Activated naive CD4-positive, alpha-beta T cell treated with anti-CD3 and anti-CD28 coated beads for 36 hours (primary cell): ENCODE measurements at regions of chr22 and their contacts with region 1.

Region 1: GRCh38 chr22:37229805-37230672 is 14.0 kb downstream of the RAC2 start:
- DNase-seq: peak; percentile 98
- H3K4me3 Mint-ChIP-seq: peak overlapping the region; percentile 67
- H3K27ac Mint-ChIP-seq: peak overlapping the region; percentile 98
- H3K4me1 Mint-ChIP-seq: peaks cover 90% of the 10 kb centered on the region
- H3K27me3 Mint-ChIP-seq: no peaks in the 10 kb centered on the region

Region 2: GRCh38 chr22:36365020-36365411 is 865.0 kb before region 1 on chr22:
- CTCF ChIA-PET with region 1: no interaction called
- intact Hi-C with region 1: loop called (anchors 10 kb)
- DNase-seq: peak; percentile 98
- H3K4me3 Mint-ChIP-seq: peak overlapping the region; percentile 53
- H3K27ac Mint-ChIP-seq: peak overlapping the region; percentile 96
- H3K4me1 Mint-ChIP-seq: peaks cover 99% of the 10 kb centered on the region
- H3K27me3 Mint-ChIP-seq: no peaks in the 10 kb centered on the region

Region 3: DNA sequence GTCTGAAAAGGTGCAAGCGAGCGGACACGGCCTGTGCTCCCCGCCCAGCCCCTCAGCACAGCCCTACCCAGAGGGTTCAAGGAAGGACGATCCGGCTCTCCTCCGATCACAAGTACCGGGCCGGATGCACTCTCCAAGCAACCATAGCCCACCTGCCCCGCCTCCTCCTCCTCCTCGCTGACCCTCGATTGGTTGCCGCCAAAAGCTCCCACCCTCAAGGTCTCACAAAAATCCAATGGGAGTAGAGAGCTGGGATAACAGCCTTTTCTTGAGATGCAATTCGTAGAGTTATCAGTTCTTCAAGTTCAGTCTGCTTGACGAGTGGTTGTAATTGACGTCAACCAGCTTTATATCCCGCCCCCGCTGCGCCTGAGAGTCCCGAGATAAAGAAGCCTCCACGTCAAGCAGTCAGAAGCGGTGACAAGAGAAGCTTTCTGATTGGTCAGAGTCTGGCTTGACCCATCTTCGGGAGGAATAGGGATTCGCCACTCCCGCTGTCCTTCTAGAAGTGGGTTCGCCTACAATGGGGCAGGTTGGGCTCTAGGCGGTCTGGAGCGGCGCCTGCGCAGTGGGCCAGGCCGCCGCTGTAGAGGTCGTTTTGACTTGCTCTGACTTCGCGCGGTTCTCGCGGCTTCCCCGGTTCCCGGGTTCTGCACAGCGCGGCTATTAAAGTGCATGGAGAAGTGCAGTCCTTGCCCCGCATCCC is 453.9 kb before region 1 on chr22 and contains the start of gene IFT27:
- CTCF ChIA-PET with region 1: no interaction called
- intact Hi-C with region 1: loop called (anchors 10 kb)
- DNase-seq: peak; percentile 99
- H3K4me3 Mint-ChIP-seq: peak within 1 kb of the TSS; percentile 91
- H3K27ac Mint-ChIP-seq: peak within 1 kb of the TSS; percentile 90
- H3K4me1 Mint-ChIP-seq: peaks cover 27% of the 10 kb centered on the region
- H3K27me3 Mint-ChIP-seq: no peaks in the 10 kb centered on the region
- total RNA-seq, gene IFT27: 15.7 to 16.2 TPM

Region 4: DNA sequence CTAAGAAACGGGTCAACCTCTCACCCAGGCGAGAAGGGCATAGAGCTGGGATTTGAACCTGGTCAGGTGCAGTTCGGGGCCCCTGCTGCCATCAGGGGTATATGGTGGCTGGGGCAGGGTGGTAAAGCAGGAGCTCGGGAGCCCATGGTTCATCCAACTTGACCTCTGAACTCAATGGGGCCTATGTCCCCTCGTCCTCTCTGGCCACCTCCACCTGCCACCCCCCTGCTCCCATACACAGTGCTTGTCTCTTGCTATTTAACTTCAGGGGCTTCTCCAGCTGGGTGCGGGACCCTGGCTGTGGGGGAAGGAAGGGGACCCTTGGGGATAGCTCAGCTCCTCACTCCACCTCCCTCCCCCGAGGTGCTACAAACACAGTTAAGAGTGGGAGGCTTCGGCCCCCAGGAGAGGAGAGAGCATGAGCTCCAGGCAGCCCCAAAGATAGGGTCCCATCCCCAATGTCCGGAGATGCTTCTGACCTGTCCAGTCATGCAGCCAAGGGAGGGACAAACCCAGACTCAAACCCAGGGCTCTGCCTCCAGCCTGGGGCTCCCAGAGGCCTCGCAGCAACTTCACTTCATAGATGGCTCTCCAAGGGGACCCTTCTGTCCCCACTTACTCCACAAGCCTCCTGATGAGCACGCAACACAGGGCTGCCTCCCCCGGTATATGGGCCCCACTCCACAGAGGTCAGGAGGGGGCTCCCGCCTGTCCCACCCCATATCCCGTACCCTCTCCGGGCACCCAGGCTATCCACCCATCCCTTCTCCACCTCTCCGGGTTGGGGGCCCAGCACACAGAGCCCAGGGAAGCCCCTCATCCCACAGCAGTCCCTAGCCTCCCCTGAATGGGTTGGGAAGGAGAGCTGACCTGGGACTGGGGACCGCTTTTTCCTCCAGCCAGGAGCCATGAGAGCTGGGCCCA is 81.0 kb before region 1 on chr22:
- CTCF ChIA-PET with region 1: no interaction called
- intact Hi-C with region 1: loop called (anchors 5 kb)
- DNase-seq: no peak
- H3K4me3 Mint-ChIP-seq: peak overlapping the region; percentile 87
- H3K27ac Mint-ChIP-seq: peak overlapping the region; percentile 96
- H3K4me1 Mint-ChIP-seq: peaks cover 53% of the 10 kb centered on the region
- H3K27me3 Mint-ChIP-seq: no peaks in the 10 kb centered on the region

Region 5: GRCh38 chr22:37193629-37194191 is 36.3 kb before region 1 on chr22:
- CTCF ChIA-PET with region 1: no interaction called
- intact Hi-C with region 1: no loop called
- DNase-seq: peak; percentile 61
- H3K4me3 Mint-ChIP-seq: peak overlapping the region; percentile 14
- H3K27ac Mint-ChIP-seq: peak overlapping the region; percentile 65
- H3K4me1 Mint-ChIP-seq: peaks cover 45% of the 10 kb centered on the region
- H3K27me3 Mint-ChIP-seq: no peaks in the 10 kb centered on the region

Region 6: GRCh38 chr22:37218771-37219411 is 11.1 kb before region 1 on chr22:
- CTCF ChIA-PET with region 1: interaction called, 4 read pairs
- intact Hi-C with region 1: loop called (anchors 1 kb)
- DNase-seq: peak; percentile 86
- H3K4me3 Mint-ChIP-seq: peak overlapping the region; percentile 88
- H3K27ac Mint-ChIP-seq: peak overlapping the region; percentile 98
- H3K4me1 Mint-ChIP-seq: peaks cover 75% of the 10 kb centered on the region
- H3K27me3 Mint-ChIP-seq: no peaks in the 10 kb centered on the region

Region 7: GRCh38 chr22:37260901-37261336 is 30.9 kb after region 1 on chr22:
- CTCF ChIA-PET with region 1: interaction called, 40 read pairs
- intact Hi-C with region 1: no loop called
- DNase-seq: peak; percentile 75
- H3K4me3 Mint-ChIP-seq: no peak overlapping the region
- H3K27ac Mint-ChIP-seq: no peak overlapping the region
- H3K4me1 Mint-ChIP-seq: peaks cover 34% of the 10 kb centered on the region
- H3K27me3 Mint-ChIP-seq: no peaks in the 10 kb centered on the region